ENCODE measurements at regions of chr4 and their contacts with region 1.

Region 1: DNA sequence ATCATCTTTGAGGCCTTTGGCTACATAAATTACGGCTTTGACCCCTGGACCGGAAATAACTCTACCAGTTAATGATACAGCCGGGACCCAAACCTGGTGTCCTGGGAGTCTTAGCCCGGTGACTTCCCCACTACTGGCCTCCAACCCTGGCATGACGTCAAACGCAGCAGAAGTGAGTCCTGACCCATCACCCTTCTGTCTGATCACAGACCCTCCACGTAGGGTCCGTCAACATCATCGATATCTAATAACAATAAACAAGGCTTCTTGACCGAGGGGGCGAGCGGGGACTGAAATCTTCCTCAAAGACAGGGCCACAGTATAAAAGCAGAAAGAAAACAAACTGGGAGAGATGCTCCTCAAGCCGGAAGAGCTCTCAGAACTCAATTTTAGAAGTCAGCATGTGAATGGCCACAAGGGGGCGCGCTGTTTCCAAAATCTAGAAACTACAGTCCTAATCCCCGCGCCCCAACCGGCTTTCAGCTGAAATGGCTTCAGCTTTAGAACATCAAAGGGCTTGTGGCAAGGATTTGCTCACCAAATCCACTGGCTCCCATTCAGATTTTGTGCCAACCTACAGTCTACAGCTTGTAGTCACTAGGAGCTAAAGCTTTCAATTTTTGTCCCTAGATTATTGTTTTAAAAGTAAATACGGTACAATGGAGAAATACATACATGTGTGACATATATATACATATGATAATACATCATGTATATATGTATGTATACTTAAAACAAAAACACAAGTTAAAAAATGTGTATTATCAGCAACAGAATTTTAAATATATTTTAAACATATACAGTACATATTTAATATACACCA is 46.4 kb upstream of the ENPP6 start:
- DNase-seq: peak; percentile 78 to 96 (median 91)
- ATAC-seq: peak; percentile 56 to 84 (median 62)
- H3K4me3 ChIP-seq: no peak overlapping the region
- H3K4me3 Mint-ChIP-seq: no peak overlapping the region
- H3K27ac ChIP-seq: no peak overlapping the region
- H3K27ac Mint-ChIP-seq: peak overlapping the region; percentile 9 to 72
- H3K4me1 ChIP-seq: peaks cover 9 to 25% of the 10 kb centered on the region in 2 experiments
- H3K4me1 Mint-ChIP-seq: peaks cover 30 to 39% (median 34%) of the 10 kb centered on the region in 3 donors
- H3K27me3 ChIP-seq: no peaks in the 10 kb centered on the region
- H3K27me3 Mint-ChIP-seq: peaks cover 0 to 2% of the 10 kb centered on the region in 2 donors

Region 2: DNA sequence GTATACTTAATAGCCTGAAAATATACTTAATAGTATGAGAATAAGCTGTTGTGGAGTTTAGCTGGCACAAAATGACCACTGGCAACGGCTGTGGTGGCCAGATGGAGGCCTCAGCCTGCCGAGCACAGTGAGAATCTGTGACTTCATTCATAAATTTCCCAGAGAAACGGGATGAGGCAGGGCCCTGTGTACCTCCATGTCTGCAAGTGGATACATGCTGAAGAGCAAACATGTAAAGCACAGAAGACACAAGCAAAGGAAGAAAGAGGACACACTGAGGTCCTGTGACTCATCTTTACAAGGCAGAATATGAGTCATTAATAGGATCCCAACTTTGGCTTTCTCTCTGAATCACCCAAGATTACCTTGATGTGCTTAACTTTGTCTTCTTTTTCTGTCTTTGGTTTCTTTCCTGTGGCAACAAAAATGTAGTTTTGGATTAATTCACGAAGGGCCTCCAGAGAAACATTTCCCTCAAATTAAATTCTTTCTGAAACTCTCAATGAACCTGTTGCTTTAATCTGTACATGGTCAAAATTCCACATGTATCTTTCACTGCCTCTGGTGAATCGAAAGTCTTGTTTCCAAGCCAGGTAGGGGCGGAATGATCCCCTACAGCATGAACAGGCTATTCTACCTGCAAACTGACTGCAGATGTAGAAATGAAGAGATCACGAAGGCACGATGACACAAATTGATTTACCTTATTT is 153.8 kb after region 1 on chr4:
- CTCF ChIA-PET with region 1: interaction called in 1 of 2 experiments, 12 read pairs
- POLR2A ChIA-PET with region 1: no interaction called
- DNase-seq: peak in 3 of 35 experiments; percentile 12 to 59 (median 21)
- ATAC-seq: peak; percentile 30 to 90 (median 86)
- H3K4me3 ChIP-seq: peak overlapping the region; percentile 38 to 49
- H3K4me3 Mint-ChIP-seq: peak overlapping the region; percentile 76 to 80 (median 78)
- H3K27ac ChIP-seq: peak overlapping the region; percentile 87
- H3K27ac Mint-ChIP-seq: peak overlapping the region; percentile 82 to 94
- H3K4me1 ChIP-seq: peaks cover 16 to 48% of the 10 kb centered on the region in 2 experiments
- H3K4me1 Mint-ChIP-seq: peaks cover 61 to 88% (median 79%) of the 10 kb centered on the region in 3 donors
- H3K27me3 ChIP-seq: no peaks in the 10 kb centered on the region
- H3K27me3 Mint-ChIP-seq: no peaks in the 10 kb centered on the region

Region 3: GRCh38 chr4:184538023-184538599 is 274.0 kb after region 1 on chr4:
- CTCF ChIA-PET with region 1: interaction called in 1 of 2 experiments, 11 read pairs
- POLR2A ChIA-PET with region 1: interaction called in 1 of 2 experiments, 4 read pairs
- DNase-seq: peak; percentile 22 to 80 (median 49)
- ATAC-seq: peak; percentile 53 to 66 (median 60)
- H3K4me3 ChIP-seq: peak overlapping the region; percentile 80 to 86
- H3K4me3 Mint-ChIP-seq: peak overlapping the region; percentile 83 to 94 (median 89)
- H3K27ac ChIP-seq: peak overlapping the region; percentile 90
- H3K27ac Mint-ChIP-seq: peak overlapping the region; percentile 94 to 98
- H3K4me1 ChIP-seq: peaks cover 31 to 39% of the 10 kb centered on the region in 2 experiments
- H3K4me1 Mint-ChIP-seq: peaks cover 33 to 40% (median 36%) of the 10 kb centered on the region in 3 donors
- H3K27me3 ChIP-seq: no peaks in the 10 kb centered on the region
- H3K27me3 Mint-ChIP-seq: no peaks in the 10 kb centered on the region

Region 4: GRCh38 chr4:184649026-184649970 is 385.2 kb after region 1 on chr4 and contains the starts of genes CASP3 and PRIMPOL:
- CTCF ChIA-PET with region 1: interaction called, 3 to 16 read pairs
- POLR2A ChIA-PET with region 1: interaction called, 4 to 10 read pairs
- DNase-seq: peak; percentile 88 to 98 (median 95)
- ATAC-seq: peak; percentile 87 to 94 (median 90)
- H3K4me3 ChIP-seq: peak within 1 kb of the TSS; percentile 85 to 97
- H3K4me3 Mint-ChIP-seq: peak within 1 kb of the TSS; percentile 98
- H3K27ac ChIP-seq: peak within 1 kb of the TSS; percentile 69
- H3K27ac Mint-ChIP-seq: peak within 1 kb of the TSS; percentile 96 to 97
- H3K4me1 ChIP-seq: peaks cover 31 to 37% of the 10 kb centered on the region in 2 experiments
- H3K4me1 Mint-ChIP-seq: peaks cover 50 to 58% (median 51%) of the 10 kb centered on the region in 3 donors
- H3K27me3 ChIP-seq: no peaks in the 10 kb centered on the region
- H3K27me3 Mint-ChIP-seq: no peaks in the 10 kb centered on the region
- total RNA-seq, gene CASP3: 10.7 to 23.5 (median 19.9) TPM
- total RNA-seq, gene PRIMPOL: 11.6 to 14.8 (median 12.4) TPM

Region 5: DNA sequence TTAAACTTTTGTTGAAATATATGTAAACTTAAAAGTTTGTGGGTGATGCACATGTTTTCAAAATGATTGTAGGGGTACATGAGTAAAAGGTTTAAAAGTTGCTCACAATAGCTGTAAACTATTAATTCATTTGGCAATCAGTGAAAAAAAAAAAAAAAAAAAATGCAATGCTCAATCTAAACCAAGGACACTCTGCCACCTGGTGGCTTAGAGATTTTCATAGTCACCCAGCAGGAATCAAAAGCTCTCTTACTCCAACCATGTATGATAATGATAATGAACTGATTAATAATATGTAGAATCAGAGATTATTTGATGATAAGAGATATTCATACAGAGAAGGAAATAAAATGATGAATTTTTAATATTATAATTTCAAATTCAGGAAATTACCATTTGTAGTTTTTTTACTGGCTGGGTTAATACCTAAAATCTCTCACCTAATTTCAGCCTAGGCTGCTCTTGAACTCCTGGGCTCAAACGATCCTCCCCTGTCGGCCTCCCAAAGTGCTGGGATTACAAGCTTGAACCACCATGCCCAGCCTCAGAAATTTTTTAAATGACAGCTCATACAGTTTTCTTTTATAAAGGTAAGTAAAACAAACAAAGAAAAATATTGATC is 832.0 kb after region 1 on chr4:
- CTCF ChIA-PET with region 1: interaction called, 7 to 23 read pairs
- POLR2A ChIA-PET with region 1: no interaction called
- DNase-seq: peak in 16 of 35 experiments; percentile 3 to 53 (median 9)
- ATAC-seq: no peak
- H3K4me3 ChIP-seq: no peak overlapping the region
- H3K4me3 Mint-ChIP-seq: no peak overlapping the region
- H3K27ac ChIP-seq: no peak overlapping the region
- H3K27ac Mint-ChIP-seq: no peak overlapping the region
- H3K4me1 ChIP-seq: no peaks in the 10 kb centered on the region
- H3K4me1 Mint-ChIP-seq: no peaks in the 10 kb centered on the region
- H3K27me3 ChIP-seq: peaks cover 0 to 25% of the 10 kb centered on the region in 2 experiments
- H3K27me3 Mint-ChIP-seq: peaks cover 16 to 40% of the 10 kb centered on the region in 2 donors